Prostate gland (tissue), 2 donors: ENCODE measurements at regions of chr11 and their contacts with region 1.

Region 1: GRCh38 chr11:86671682-86672621 is at the start of gene ME3:
- DNase-seq: peak; percentile 87
- H3K4me3 ChIP-seq: peak within 1 kb of the TSS; percentile 53 to 63
- H3K27ac ChIP-seq: peak within 1 kb of the TSS; percentile 91 to 92
- H3K4me1 ChIP-seq: peaks cover 3% of the 10 kb centered on the region
- H3K27me3 ChIP-seq: no peaks in the 10 kb centered on the region
- CTCF ChIP-seq: no peak
- POLR2A ChIP-seq: peak; percentile 43
- total RNA-seq, gene ME3: 31.4 to 107 TPM

Region 2: GRCh38 chr11:86620891-86621521 is 50.9 kb before region 1 on chr11:
- intact Hi-C with region 1: loop called (anchors 5 kb)
- DNase-seq: no peak
- H3K4me3 ChIP-seq: no peak overlapping the region
- H3K27ac ChIP-seq: peak overlapping the region in 1 of 2 donors; percentile 29
- H3K4me1 ChIP-seq: no peaks in the 10 kb centered on the region
- H3K27me3 ChIP-seq: no peaks in the 10 kb centered on the region
- CTCF ChIP-seq: no peak
- POLR2A ChIP-seq: no peak

Region 3: GRCh38 chr11:86706321-86706720 is 34.4 kb after region 1 on chr11:
- intact Hi-C with region 1: no loop called
- DNase-seq: peak; percentile 36
- H3K4me3 ChIP-seq: no peak overlapping the region
- H3K27ac ChIP-seq: peak overlapping the region; percentile 11 to 44
- H3K4me1 ChIP-seq: no peaks in the 10 kb centered on the region
- H3K27me3 ChIP-seq: no peaks in the 10 kb centered on the region
- CTCF ChIP-seq: no peak
- POLR2A ChIP-seq: no peak

Region 4: DNA sequence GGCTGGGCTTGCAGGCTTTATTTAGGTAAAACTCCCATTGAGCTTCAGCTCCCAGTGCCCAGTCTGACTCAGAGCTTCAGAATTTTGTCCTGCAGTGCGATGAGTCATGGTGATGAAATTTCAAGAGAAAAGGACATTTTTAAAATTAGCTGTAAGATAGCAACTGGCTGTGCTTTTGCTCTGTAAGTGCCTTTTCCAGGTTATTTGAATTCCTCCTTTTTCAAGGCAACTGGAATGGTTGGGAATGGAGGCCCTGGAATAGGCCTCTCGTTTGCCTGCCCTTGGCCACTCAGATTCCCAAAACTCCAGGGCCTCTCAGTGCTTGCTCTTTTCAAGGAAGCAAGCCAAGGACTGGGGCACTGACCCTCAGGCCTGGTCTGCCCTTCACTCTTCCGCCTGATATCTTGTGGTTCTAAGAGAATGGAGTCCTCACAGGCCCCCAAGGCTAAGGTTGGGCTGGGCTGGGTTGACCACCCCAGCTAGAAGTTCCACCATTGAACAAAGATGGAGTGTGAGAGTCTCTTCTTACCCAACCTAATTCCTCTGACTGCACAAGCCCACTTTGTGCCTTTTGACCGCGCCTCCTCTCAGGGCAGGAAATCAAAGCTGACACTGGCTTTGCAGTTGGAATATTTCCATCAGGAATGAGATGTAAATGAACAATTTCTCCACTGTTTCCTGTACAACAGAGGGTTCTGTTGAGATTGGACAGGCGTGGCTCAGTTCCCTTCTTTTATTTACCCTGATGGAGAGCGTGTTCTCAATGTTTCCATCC is 68.9 kb after region 1 on chr11:
- intact Hi-C with region 1: loop called (anchors 5 kb)
- DNase-seq: peak; percentile 46
- H3K4me3 ChIP-seq: no peak overlapping the region
- H3K27ac ChIP-seq: peak overlapping the region; percentile 63
- H3K4me1 ChIP-seq: no peaks in the 10 kb centered on the region
- H3K27me3 ChIP-seq: no peaks in the 10 kb centered on the region
- CTCF ChIP-seq: no peak
- POLR2A ChIP-seq: no peak